Panc1 (cell line): ENCODE measurements at regions of chr17 and their contacts with region 1.

Region 1: GRCh38 chr17:58447039-58447975 is 30.0 kb upstream of the RNF43 start:
- DNase-seq: peak; percentile 71
- ATAC-seq: peak; percentile 99
- H3K4me3 ChIP-seq: no peak overlapping the region
- H3K27ac ChIP-seq: no peak overlapping the region
- H3K4me1 ChIP-seq: no peaks in the 10 kb centered on the region
- H3K27me3 ChIP-seq: 0 out of 2 replicates have a peak, but pooled peaks cover 2% of the 10 kb centered on the region
- CTCF ChIP-seq: peak; percentile 80

Region 2: GRCh38 chr17:58317421-58318064 is 129.8 kb before region 1 on chr17:
- CTCF ChIA-PET with region 1: interaction called, 6 read pairs
- POLR2A ChIA-PET with region 1: no interaction called
- in situ Hi-C with region 1: no loop called
- intact Hi-C with region 1: loop called (anchors 1 kb)
- DNase-seq: peak; percentile 45
- ATAC-seq: peak; percentile 93
- H3K4me3 ChIP-seq: no peak overlapping the region
- H3K27ac ChIP-seq: no peak overlapping the region
- H3K4me1 ChIP-seq: no peaks in the 10 kb centered on the region
- H3K27me3 ChIP-seq: no peaks in the 10 kb centered on the region
- CTCF ChIP-seq: peak; percentile 86

Region 3: DNA sequence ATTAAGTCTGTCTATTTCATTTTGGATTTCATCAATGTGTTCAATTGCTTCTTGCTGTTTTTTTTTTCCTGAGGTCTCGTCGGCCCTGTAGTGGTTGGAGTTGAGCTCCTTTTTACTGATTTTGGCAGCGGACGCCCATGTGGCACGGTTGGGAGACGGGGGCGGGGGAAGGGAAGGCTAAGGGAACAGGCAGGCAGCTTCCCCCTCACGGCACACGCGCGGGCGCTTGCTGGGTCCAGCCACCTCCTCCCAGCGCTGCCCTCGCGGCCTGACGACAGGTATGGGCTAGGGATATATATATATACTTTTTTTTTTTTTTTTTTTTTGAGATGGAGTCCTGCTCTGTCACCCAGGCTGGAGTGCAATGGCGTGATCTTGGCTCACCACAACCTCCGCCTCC is 29.5 kb after region 1 on chr17:
- CTCF ChIA-PET with region 1: no interaction called
- POLR2A ChIA-PET with region 1: no interaction called
- in situ Hi-C with region 1: no loop called
- intact Hi-C with region 1: no loop called
- DNase-seq: no peak
- ATAC-seq: no peak
- H3K4me3 ChIP-seq: no peak overlapping the region
- H3K27ac ChIP-seq: no peak overlapping the region
- H3K4me1 ChIP-seq: no peaks in the 10 kb centered on the region
- H3K27me3 ChIP-seq: no peaks in the 10 kb centered on the region
- CTCF ChIP-seq: no peak

Region 4: GRCh38 chr17:58684003-58684402 is 236.7 kb after region 1 on chr17:
- CTCF ChIA-PET with region 1: interaction called, 12 read pairs
- POLR2A ChIA-PET with region 1: no interaction called
- in situ Hi-C with region 1: no loop called
- intact Hi-C with region 1: no loop called
- DNase-seq: no peak
- ATAC-seq: no peak
- H3K4me3 ChIP-seq: no peak overlapping the region
- H3K27ac ChIP-seq: no peak overlapping the region
- H3K4me1 ChIP-seq: peaks cover 7% of the 10 kb centered on the region; the same call in 1 of the 2 replicates
- H3K27me3 ChIP-seq: no peaks in the 10 kb centered on the region
- CTCF ChIP-seq: no peak